ENCODE measurements at regions of chr2 and their contacts with region 1.

Region 1: DNA sequence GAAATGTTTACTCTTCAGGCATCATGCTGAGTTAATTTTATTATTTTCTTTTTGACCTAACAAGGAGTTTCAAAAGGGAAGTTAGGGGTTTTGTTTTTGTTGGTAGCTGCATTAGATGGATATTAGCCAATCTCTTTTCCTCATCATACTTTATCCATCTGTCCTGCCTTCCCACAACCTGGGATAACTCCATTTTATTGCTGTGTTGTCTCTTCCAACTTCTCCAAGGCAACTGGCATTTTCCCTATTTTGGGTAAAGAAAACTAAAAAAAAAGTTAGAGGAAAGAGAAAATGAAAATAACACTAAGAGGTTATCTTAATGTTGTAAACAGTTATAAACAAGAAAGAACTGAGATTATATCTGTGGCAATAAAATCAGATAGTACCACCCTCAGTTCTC is 147.0 kb downstream of the PID1 start:
- DNase-seq: no peak
- H3K4me3 ChIP-seq: no peak overlapping the region
- H3K27ac ChIP-seq: no peak overlapping the region
- H3K27me3 ChIP-seq: no peaks in the 10 kb centered on the region
- CTCF ChIP-seq: no peak

Region 2: GRCh38 chr2:229313591-229313990 is 189.5 kb after region 1 on chr2:
- intact Hi-C with region 1: no loop called
- DNase-seq: no peak
- H3K4me3 ChIP-seq: no peak overlapping the region
- H3K27ac ChIP-seq: peak overlapping the region in 1 of 59 donors; percentile 0
- H3K27me3 ChIP-seq: no peaks in the 10 kb centered on the region
- CTCF ChIP-seq: no peak

Region 3: GRCh38 chr2:229572507-229573271 is 448.6 kb after region 1 on chr2:
- intact Hi-C with region 1: loop called in 1 of 2 experiments (anchors 5 kb)
- DNase-seq: no peak
- H3K4me3 ChIP-seq: no peak overlapping the region
- H3K27ac ChIP-seq: no peak overlapping the region
- H3K27me3 ChIP-seq: no peaks in the 10 kb centered on the region
- CTCF ChIP-seq: no peak

Measured in dorsolateral prefrontal cortex (tissue), 120 donors.